ENCODE measurements at regions of chr3 and their contacts with region 1.

Region 1: DNA sequence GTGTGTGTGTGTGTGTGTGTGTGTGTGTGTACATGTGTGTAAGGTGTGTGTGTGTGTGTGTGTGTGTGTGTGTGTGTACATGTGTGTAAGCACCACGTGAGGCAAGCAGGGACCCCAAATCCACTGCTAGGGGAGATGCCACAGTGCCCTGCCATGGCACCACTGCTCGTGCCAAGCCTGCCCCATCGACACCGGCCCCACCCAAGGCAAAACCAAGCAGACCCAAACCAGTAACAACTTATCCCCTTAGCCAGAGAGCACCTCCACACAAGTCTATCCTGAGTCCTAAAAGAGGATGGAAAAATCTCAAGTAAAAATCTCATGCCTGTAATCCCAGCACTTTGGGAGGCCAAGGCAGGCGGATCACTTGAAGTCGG is 45.1 kb downstream of the BDH1 start:
- DNase-seq: no peak
- H3K4me3 ChIP-seq: no peak overlapping the region
- H3K27ac ChIP-seq: no peak overlapping the region
- H3K4me1 ChIP-seq: no peaks in the 10 kb centered on the region
- H3K27me3 ChIP-seq: no peaks in the 10 kb centered on the region
- CTCF ChIP-seq: no peak

Region 2: DNA sequence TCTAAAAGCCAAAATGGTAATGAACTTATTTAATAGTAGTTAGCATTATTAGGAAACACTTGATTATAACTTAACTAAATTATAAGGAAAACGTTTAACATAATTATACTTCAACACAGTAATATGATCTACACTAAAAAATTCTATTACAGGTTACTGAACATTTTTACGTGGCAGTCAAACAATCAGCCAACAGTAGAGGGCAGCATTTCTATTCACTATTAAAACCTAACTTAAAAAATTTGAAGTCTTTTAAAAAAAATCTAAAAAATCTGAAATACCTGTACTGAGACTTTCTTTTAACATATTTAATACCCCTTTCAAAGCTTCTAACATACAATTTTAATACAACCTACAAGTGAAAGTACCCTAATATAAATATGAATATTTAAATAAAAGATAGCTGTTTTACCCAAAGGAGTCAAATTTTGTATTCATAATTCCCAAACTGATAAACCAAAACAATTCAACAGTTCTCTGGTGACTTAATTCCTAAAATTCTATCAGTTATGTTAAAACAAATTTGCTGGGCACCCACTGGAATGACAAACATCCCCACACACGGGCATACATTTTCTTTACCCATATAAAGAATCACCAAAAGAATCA is 253.7 kb before region 1 on chr3:
- intact Hi-C with region 1: loop called (anchors 1 kb)
- DNase-seq: no peak
- H3K4me3 ChIP-seq: no peak overlapping the region
- H3K27ac ChIP-seq: no peak overlapping the region
- H3K4me1 ChIP-seq: no peaks in the 10 kb centered on the region
- H3K27me3 ChIP-seq: no peaks in the 10 kb centered on the region
- CTCF ChIP-seq: peak; percentile 42 to 70 (median 68)